Activated CD4-positive, alpha-beta T cell treated with anti-CD3 and anti-CD28 coated beads, Interleukin-2, amount 10 ng/mL, durations not matched to agents 24 days and 14 days (primary cell): ENCODE measurements at regions of chr6 and their contacts with region 1.

Region 1: DNA sequence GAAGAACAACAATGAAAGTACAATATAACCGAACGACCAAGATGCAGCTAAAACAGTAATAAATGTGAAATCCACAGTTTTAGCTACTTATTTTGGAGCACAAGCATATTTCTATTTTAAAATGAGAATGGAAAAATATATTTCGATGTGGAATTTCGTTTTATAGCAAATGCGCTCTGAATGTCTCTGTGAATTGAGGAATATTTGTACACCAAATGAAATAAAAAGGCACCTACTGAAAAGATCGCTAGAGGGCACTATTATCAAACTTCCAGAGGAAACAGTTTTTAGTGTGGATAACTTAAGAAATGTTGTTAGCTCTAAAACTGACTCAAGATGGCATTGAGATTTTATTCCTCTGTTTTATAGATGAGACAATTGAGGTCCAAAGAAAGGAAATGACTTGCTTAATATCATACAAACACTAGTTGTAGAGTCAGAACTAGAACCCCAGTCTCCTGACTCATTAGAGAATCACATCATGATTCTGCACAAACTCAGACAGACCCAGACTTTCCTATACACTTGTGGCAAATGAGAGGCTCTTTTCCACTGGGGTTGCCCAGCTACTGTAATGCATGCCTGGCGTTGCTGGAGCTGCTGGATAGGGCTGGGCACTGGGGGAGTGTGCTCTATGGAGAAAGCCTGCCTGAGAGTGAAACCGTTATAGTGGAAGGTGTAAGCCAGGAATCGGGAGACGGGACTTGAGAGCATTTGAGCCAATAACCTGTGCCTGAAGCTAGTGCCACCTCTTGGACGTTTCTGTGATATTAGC is 51.9 kb downstream of the GCLC start:
- DNase-seq: peak; percentile 69
- H3K4me3 Mint-ChIP-seq: no peak overlapping the region
- H3K27ac Mint-ChIP-seq: peak overlapping the region; percentile 66
- H3K4me1 Mint-ChIP-seq: peaks cover 7% of the 10 kb centered on the region
- H3K27me3 Mint-ChIP-seq: peaks cover 21% of the 10 kb centered on the region

Region 2: GRCh38 chr6:52984247-52984646 is 508.8 kb before region 1 on chr6:
- intact Hi-C with region 1: loop called (anchors 5 kb)
- DNase-seq: peak; percentile 84
- H3K4me3 Mint-ChIP-seq: peak overlapping the region; percentile 25
- H3K27ac Mint-ChIP-seq: peak overlapping the region; percentile 92
- H3K4me1 Mint-ChIP-seq: peaks cover 59% of the 10 kb centered on the region
- H3K27me3 Mint-ChIP-seq: peaks cover 2% of the 10 kb centered on the region

Region 3: DNA sequence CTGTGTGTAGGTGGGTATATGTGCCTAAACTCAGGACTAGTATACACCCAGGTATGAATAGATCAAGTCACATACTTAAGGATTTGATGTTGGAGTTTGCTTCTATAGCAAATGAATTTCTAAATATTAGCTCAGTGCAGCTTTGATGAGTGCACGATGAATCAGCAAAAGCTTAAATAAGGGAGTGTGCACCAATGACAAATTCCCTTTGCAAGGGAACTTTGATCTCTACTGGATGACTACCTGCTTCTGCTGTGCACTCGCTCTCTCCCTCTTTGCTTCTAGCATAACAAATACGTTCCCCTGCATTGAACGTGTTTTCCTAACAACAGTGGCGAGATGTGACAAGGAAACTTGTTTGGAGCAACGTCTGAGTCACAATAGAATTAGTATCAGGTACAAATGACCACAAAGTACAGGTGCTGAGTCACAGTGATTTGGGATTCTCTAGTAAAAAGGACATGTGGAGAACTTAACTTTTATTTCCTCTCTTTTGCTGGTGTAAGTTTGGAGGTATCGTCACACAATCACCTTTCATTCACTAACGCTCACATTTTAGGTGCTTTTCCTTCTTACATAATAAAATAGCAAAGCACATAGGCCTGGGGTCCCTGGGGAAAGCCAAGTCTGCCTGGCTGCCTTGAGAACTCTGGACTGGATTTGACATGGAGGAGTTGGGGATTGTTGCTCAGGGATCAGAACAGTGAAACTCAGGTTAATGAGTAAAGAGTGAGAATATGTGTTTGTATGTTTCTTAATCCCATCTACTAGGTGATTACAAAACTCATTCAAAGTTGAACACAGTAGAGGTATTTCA is 122.8 kb after region 1 on chr6:
- intact Hi-C with region 1: no loop called
- DNase-seq: no peak
- H3K4me3 Mint-ChIP-seq: no peak overlapping the region
- H3K27ac Mint-ChIP-seq: no peak overlapping the region
- H3K4me1 Mint-ChIP-seq: peaks cover 6% of the 10 kb centered on the region
- H3K27me3 Mint-ChIP-seq: peaks cover 4% of the 10 kb centered on the region

Region 4: DNA sequence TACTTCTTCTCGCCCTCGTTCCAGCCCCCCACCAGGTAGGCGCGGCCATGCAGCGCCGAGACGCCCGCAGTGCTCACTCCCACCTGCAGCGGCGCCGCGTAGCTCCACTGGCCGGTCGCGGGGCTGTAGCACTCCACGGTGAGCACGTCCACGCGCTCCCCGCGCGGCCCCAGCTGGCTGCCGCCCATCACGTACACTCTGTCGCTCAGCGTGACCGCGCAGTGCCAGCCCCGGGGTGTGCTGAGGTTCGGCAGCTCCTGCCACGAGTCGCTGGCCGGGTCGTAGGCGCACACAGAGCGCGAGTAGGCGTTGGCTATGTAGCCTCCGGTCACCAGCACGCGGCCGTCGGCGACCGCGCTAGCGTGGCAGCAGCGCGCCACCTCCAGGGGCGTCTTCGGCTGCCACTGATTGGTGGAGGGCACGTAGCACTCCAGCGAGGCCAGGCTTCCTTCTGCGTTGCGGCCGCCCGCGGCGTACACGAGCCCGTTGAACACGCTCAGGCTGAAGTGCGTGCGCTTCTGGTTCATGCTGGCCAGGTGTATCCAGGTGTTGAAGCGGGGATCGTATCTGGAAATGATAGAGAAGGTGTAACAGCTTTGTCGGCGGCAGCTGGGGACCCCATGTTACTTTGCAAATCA is 158.8 kb after region 1 on chr6:
- intact Hi-C with region 1: loop called (anchors 1 kb)
- DNase-seq: peak; percentile 92
- H3K4me3 Mint-ChIP-seq: peak overlapping the region; percentile 90
- H3K27ac Mint-ChIP-seq: peak overlapping the region; percentile 95
- H3K4me1 Mint-ChIP-seq: peaks cover 22% of the 10 kb centered on the region
- H3K27me3 Mint-ChIP-seq: peaks cover 23% of the 10 kb centered on the region

Region 5: GRCh38 chr6:53725791-53726431 is 232.9 kb after region 1 on chr6:
- intact Hi-C with region 1: loop called (anchors 1 kb)
- DNase-seq: peak; percentile 93
- H3K4me3 Mint-ChIP-seq: no peak overlapping the region
- H3K27ac Mint-ChIP-seq: no peak overlapping the region
- H3K4me1 Mint-ChIP-seq: peaks cover 8% of the 10 kb centered on the region
- H3K27me3 Mint-ChIP-seq: peaks cover 23% of the 10 kb centered on the region

Region 6: DNA sequence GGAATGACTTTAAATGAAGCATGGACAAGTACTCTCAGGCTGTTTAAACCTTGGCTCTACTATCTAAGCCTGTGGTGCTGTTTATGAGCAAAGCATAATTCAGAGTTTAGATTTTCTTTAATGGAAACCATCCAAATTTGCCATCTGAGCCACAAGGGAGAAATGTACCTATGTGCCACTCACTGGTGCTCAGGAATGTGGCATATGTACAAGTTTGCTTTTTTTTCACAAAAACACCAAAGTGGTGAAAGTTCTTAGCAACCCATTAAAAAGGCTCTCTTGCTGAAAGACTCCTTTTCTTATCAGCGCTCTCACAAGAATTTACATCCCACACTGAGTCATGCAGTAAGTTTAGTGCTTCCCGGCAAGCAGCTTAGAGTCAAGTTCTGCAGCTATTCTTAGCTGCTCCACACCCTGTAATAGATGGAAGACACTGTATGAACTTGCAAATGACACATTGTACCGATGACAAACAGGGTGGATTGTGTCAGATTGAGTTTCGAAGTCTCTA is 560.9 kb after region 1 on chr6:
- intact Hi-C with region 1: no loop called
- DNase-seq: no peak
- H3K4me3 Mint-ChIP-seq: no peak overlapping the region
- H3K27ac Mint-ChIP-seq: no peak overlapping the region
- H3K4me1 Mint-ChIP-seq: no peaks in the 10 kb centered on the region
- H3K27me3 Mint-ChIP-seq: no peaks in the 10 kb centered on the region

Region 7: GRCh38 chr6:54878674-54879073 is 1385.6 kb after region 1 on chr6:
- intact Hi-C with region 1: no loop called
- DNase-seq: no peak
- H3K4me3 Mint-ChIP-seq: no peak overlapping the region
- H3K27ac Mint-ChIP-seq: no peak overlapping the region
- H3K4me1 Mint-ChIP-seq: no peaks in the 10 kb centered on the region
- H3K27me3 Mint-ChIP-seq: no peaks in the 10 kb centered on the region